Natural killer cell (primary cell): ENCODE measurements at regions of chr14 and their contacts with region 1.

Region 1: DNA sequence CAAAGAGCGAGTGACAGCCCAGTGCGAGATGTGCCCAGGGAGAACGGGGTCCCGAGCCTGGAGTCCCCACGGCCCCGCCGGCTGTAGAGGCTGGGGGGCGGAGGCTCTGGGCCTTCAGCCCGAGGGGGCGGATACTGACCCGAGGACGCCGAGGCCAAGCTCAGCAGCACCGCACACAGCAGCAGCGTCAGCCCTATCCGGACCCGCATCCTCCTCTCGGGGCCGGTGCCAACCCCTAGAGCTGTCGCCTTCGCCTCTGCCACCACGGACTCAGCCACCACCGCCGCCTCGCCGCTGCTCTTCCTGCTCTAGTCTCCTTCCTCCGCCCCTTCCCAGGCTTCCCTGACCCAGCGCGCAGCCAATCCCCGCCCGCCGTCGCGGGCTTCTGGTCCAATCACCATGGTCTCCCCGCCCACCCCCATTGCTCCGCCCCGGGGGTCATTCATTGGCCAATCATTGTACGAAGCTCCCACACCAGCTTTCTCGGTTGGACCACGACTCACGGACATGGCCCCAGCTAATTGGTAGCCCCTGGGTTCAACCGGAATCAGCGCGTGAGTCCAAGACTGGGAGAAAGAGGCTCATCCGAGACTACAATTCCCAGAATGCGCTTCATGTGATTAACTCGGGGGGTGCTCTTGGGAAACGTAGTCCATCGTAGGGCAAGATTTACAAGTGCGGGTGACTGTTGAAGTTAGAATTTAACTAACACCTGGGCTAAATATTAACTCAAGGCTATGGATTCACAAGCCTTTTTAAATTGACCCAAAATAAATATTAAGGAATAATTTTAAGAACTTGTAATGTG is at the start of gene SEL1L:
- DNase-seq: peak; percentile 99
- ATAC-seq: peak; percentile 89 to 97 (median 93)
- H3K4me3 ChIP-seq: peak within 1 kb of the TSS; percentile 96
- H3K4me3 Mint-ChIP-seq: peak within 1 kb of the TSS; percentile 95
- H3K27ac ChIP-seq: peak within 1 kb of the TSS; percentile 74
- H3K27ac Mint-ChIP-seq: peak within 1 kb of the TSS; percentile 82 to 95
- H3K4me1 ChIP-seq: peaks cover 5% of the 10 kb centered on the region
- H3K4me1 Mint-ChIP-seq: peaks cover 33 to 38% of the 10 kb centered on the region in 2 donors
- H3K27me3 ChIP-seq: no peaks in the 10 kb centered on the region
- H3K27me3 Mint-ChIP-seq: peaks cover 6 to 20% of the 10 kb centered on the region in 2 donors
- CTCF ChIP-seq: no peak
- total RNA-seq, gene SEL1L: 55.0 to 93.0 (median 77.0) TPM

Region 2: GRCh38 chr14:80323038-80323691 is 1210.6 kb before region 1 on chr14:
- intact Hi-C with region 1: no loop called
- DNase-seq: no peak
- ATAC-seq: no peak
- H3K4me3 ChIP-seq: no peak overlapping the region
- H3K4me3 Mint-ChIP-seq: no peak overlapping the region
- H3K27ac ChIP-seq: no peak overlapping the region
- H3K27ac Mint-ChIP-seq: no peak overlapping the region
- H3K4me1 ChIP-seq: no peaks in the 10 kb centered on the region
- H3K4me1 Mint-ChIP-seq: no peaks in the 10 kb centered on the region
- H3K27me3 ChIP-seq: no peaks in the 10 kb centered on the region
- H3K27me3 Mint-ChIP-seq: no peaks in the 10 kb centered on the region
- CTCF ChIP-seq: no peak

Region 3: DNA sequence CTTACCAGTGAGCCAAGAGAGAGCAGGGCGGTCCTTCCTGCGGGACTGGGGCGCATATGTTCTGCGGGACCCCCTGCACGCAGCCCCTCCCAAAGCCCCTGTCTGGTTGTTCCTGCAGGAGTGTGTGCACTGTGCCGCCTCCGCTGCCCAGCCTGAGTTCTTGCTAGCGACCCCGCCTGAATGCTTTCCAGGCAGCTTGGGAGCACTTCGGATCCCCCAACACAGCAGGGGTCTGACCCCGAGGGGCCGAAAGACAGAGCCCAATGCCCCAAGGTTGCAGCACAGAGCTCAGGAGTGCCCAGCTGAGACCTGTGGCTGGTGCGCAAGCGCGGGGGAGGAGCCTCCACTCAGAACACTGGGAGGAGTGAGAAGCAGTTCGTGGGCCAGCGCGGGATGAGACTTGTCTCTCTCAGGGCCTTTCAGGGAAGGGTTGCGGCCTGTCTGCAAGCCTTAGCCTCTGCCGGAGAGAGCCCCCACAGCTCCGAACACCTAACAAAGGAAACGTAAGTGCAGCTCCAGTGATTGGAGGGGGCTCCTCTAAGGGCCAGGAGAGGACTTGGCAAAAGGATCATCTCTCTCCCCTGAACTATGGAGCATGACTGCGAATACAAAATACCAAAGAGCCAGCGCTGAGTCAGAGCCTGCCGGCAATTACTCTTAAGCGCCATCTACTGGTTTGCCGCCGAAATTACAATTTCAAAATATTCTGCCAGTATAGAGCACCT is 363.5 kb before region 1 on chr14:
- intact Hi-C with region 1: loop called (anchors 2 kb)
- DNase-seq: peak; percentile 85 to 92
- ATAC-seq: peak; percentile 97 to 99 (median 97)
- H3K4me3 ChIP-seq: peak overlapping the region; percentile 54
- H3K4me3 Mint-ChIP-seq: peak overlapping the region; percentile 91
- H3K27ac ChIP-seq: peak overlapping the region; percentile 76
- H3K27ac Mint-ChIP-seq: peak overlapping the region; percentile 91 to 96
- H3K4me1 ChIP-seq: peaks cover 8% of the 10 kb centered on the region
- H3K4me1 Mint-ChIP-seq: peaks cover 18 to 24% of the 10 kb centered on the region in 2 donors
- H3K27me3 ChIP-seq: no peaks in the 10 kb centered on the region
- H3K27me3 Mint-ChIP-seq: no peaks in the 10 kb centered on the region
- CTCF ChIP-seq: peak; percentile 83

Region 4: DNA sequence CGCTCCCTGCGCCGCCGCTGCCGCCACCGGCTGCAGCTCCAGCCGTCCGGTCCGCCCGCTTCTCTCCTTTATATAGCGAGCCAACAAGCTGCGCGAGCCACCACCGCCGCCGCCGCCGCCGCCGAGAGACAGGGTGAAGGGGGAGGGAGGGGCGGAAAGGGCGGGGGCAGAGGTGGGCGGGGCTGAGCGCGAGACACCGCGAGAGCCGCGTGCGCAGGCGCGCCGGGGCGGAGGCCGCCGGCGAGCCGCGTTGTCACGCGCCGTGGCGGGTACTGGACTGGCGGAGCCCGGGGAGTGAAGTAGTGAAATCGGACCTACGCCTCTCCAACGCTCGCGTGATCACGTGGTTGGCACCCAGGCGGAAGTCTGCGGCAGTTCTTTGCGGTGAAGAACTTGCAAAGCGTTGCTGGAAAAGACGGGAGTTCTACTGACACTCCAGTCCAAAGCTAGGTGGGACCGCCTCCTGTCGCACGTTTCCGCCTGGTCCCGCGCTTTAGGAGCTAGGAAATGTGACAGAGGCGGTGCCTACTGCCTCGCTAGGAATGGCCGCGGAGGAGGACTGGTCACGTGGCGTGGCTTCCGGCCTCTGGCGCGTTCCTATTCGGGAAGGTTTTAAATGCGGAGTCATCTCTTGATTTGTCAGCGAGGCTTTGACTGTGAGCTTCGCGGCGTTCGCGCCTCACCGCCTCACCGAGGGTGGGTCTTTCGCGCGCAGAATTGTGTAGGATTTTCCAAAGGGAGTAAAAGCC is 312.7 kb before region 1 on chr14 and contains the start of gene GTF2A1:
- intact Hi-C with region 1: loop called (anchors 1 kb)
- DNase-seq: peak; percentile 94 to 98
- ATAC-seq: peak; percentile 70 to 92 (median 78)
- H3K4me3 ChIP-seq: peak within 1 kb of the TSS; percentile 98
- H3K4me3 Mint-ChIP-seq: peak within 1 kb of the TSS; percentile 100
- H3K27ac ChIP-seq: peak within 1 kb of the TSS; percentile 100
- H3K27ac Mint-ChIP-seq: peak within 1 kb of the TSS; percentile 99 to 100
- H3K4me1 ChIP-seq: peaks cover 14% of the 10 kb centered on the region
- H3K4me1 Mint-ChIP-seq: peaks cover 32 to 42% of the 10 kb centered on the region in 2 donors
- H3K27me3 ChIP-seq: no peaks in the 10 kb centered on the region
- H3K27me3 Mint-ChIP-seq: peaks cover 0 to 3% of the 10 kb centered on the region in 2 donors
- CTCF ChIP-seq: no peak
- total RNA-seq, gene GTF2A1: 24.5 to 32.7 (median 28.6) TPM

Region 5: DNA sequence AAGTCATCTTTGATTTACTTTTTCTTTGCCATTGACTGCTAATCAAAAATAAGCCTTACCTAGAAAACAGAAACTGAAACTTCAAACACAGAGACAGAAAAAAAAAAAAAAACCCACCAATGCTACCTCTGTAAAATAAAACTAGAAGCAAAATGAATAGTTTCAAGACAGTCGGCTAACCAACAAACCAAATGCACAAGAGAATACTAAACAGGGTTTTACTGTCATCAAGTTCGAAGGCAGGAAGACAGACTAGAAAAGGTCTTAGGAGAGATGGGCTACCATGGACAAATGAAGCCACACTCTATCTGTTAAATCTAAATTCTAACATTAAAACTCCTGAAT is 59.6 kb before region 1 on chr14:
- intact Hi-C with region 1: loop called (anchors 10 kb)
- DNase-seq: peak in 1 of 2 donors; percentile 50
- ATAC-seq: peak; percentile 69 to 73 (median 72)
- H3K4me3 ChIP-seq: peak overlapping the region; percentile 15
- H3K4me3 Mint-ChIP-seq: peak overlapping the region; percentile 88
- H3K27ac ChIP-seq: peak overlapping the region; percentile 82
- H3K27ac Mint-ChIP-seq: peak overlapping the region; percentile 93 to 94
- H3K4me1 ChIP-seq: no peaks in the 10 kb centered on the region
- H3K4me1 Mint-ChIP-seq: peaks cover 20 to 25% of the 10 kb centered on the region in 2 donors
- H3K27me3 ChIP-seq: no peaks in the 10 kb centered on the region
- H3K27me3 Mint-ChIP-seq: no peaks in the 10 kb centered on the region
- CTCF ChIP-seq: no peak

Region 6: DNA sequence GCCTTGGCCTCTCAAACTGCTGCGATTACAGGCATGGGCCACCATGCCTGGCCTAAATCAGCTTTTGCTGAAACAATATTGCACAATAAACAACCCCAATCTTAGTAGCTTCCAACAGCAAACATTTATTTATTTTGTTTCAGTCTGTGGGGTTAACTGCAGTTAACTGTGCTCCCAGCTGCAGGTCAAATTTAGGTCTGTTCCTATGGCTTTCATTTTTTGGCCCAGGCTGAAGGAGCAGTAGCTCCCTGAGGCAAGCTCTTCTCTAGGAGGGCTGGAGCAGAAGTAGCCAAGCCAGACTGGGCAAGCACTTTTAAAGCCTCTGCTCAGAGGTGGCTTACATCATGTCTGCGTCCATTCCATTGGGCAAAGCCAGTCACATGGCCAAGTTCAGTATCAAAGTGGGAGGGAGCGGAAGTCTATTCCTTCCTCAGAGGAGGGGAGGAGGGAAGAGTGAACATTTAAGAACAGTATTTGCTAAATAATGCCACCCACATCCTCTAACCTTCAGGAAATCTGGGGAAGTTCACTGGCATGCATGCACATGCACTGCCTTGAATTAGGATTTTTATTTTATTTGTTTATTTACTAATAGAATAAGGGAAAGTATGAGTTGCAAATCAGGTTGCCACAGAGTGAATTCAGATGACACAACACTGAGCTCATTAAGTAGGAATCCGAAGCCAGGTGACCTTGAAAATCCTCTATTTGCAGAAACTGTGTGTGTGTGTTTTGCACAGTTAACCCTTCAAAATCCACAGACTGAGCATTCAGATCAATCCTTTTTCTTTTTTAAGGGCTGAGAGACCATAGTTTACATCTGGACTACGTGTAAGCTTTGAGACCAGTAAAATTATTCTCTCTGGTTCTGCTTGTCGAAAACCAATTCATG is 121.9 kb after region 1 on chr14:
- intact Hi-C with region 1: no loop called
- DNase-seq: no peak
- ATAC-seq: no peak
- H3K4me3 ChIP-seq: no peak overlapping the region
- H3K4me3 Mint-ChIP-seq: no peak overlapping the region
- H3K27ac ChIP-seq: no peak overlapping the region
- H3K27ac Mint-ChIP-seq: no peak overlapping the region
- H3K4me1 ChIP-seq: no peaks in the 10 kb centered on the region
- H3K4me1 Mint-ChIP-seq: no peaks in the 10 kb centered on the region
- H3K27me3 ChIP-seq: no peaks in the 10 kb centered on the region
- H3K27me3 Mint-ChIP-seq: no peaks in the 10 kb centered on the region
- CTCF ChIP-seq: no peak

Region 7: GRCh38 chr14:81681541-81681940 is 147.8 kb after region 1 on chr14:
- intact Hi-C with region 1: no loop called
- DNase-seq: no peak
- ATAC-seq: no peak
- H3K4me3 ChIP-seq: no peak overlapping the region
- H3K4me3 Mint-ChIP-seq: no peak overlapping the region
- H3K27ac ChIP-seq: no peak overlapping the region
- H3K27ac Mint-ChIP-seq: no peak overlapping the region
- H3K4me1 ChIP-seq: no peaks in the 10 kb centered on the region
- H3K4me1 Mint-ChIP-seq: no peaks in the 10 kb centered on the region
- H3K27me3 ChIP-seq: no peaks in the 10 kb centered on the region
- H3K27me3 Mint-ChIP-seq: peaks cover 0 to 3% of the 10 kb centered on the region in 2 donors
- CTCF ChIP-seq: no peak